Heart left ventricle (tissue), 16 donors: ENCODE measurements at regions of chr15 and their contacts with region 1.

Region 1: DNA sequence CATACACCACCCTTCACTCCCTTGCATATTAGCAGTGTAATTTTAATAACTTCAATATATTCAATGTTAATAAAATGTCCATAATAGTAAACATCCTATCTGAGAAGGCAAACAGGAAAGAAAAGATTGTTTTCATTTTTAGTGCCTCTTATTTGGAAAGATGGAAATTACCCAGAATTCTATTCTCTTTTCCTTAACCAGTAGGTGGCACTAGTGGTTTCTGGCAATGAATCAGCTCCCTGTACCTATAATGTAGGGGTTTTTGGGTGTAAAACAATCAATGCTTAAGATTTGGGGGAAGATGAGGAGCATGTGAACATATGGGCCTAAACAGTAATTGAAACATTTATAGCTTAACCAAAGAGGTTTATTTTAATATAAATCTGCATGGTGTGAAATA is 5.7 kb upstream of the SEMA6D start:
- DNase-seq: no peak
- ATAC-seq: no peak
- H3K4me3 ChIP-seq: no peak overlapping the region
- H3K27ac ChIP-seq: no peak overlapping the region
- H3K4me1 ChIP-seq: peaks cover 0 to 12% (median 7%) of the 10 kb centered on the region in 12 donors
- H3K27me3 ChIP-seq: peaks cover 0 to 4% (median 0%) of the 10 kb centered on the region in 9 donors
- CTCF ChIP-seq: peak; percentile 28 to 68 (median 54)
- POLR2A ChIP-seq: no peak

Region 2: GRCh38 chr15:47506329-47507100 is 205.1 kb before region 1 on chr15:
- intact Hi-C with region 1: loop called in 7 of 10 experiments (anchors 2 to 10 kb)
- DNase-seq: peak in 3 of 5 donors; percentile 18 to 29 (median 22)
- ATAC-seq: peak; percentile 74 to 91 (median 87)
- H3K4me3 ChIP-seq: no peak overlapping the region
- H3K27ac ChIP-seq: peak overlapping the region in 8 of 12 donors; percentile 11 to 70 (median 43)
- H3K4me1 ChIP-seq: peaks cover 0 to 42% (median 13%) of the 10 kb centered on the region in 12 donors
- H3K27me3 ChIP-seq: peaks cover 0 to 5% (median 0%) of the 10 kb centered on the region in 9 donors
- CTCF ChIP-seq: no peak
- POLR2A ChIP-seq: no peak

Region 3: GRCh38 chr15:48001393-48002039 is 289.9 kb after region 1 on chr15:
- intact Hi-C with region 1: no loop called
- DNase-seq: no peak
- ATAC-seq: no peak
- H3K4me3 ChIP-seq: no peak overlapping the region
- H3K27ac ChIP-seq: no peak overlapping the region
- H3K4me1 ChIP-seq: peaks cover 0 to 7% (median 0%) of the 10 kb centered on the region in 12 donors
- H3K27me3 ChIP-seq: peaks cover 0 to 3% (median 0%) of the 10 kb centered on the region in 9 donors
- CTCF ChIP-seq: no peak
- POLR2A ChIP-seq: no peak